Mammary epithelial cell (primary cell): ENCODE measurements at regions of chr10 and their contacts with region 1.

Region 1: GRCh38 chr10:32207544-32207943 is 139.4 kb downstream of the EPC1 start:
- DNase-seq: peak; percentile 39
- H3K4me3 ChIP-seq: no peak overlapping the region
- H3K27ac ChIP-seq: no peak overlapping the region
- H3K4me1 ChIP-seq: no peaks in the 10 kb centered on the region
- H3K27me3 ChIP-seq: no peaks in the 10 kb centered on the region
- CTCF ChIP-seq: peak; percentile 64 to 85

Region 2: GRCh38 chr10:31836569-31837406 is 370.8 kb before region 1 on chr10:
- CTCF ChIA-PET with region 1: no interaction called
- dilution Hi-C with region 1: no loop called
- in situ Hi-C with region 1: no loop called
- intact Hi-C with region 1: loop called (anchors 5 kb)
- DNase-seq: peak; percentile 2
- H3K4me3 ChIP-seq: no peak overlapping the region
- H3K27ac ChIP-seq: no peak overlapping the region
- H3K4me1 ChIP-seq: no peaks in the 10 kb centered on the region
- H3K27me3 ChIP-seq: no peaks in the 10 kb centered on the region
- CTCF ChIP-seq: peak; percentile 55 to 61

Region 3: DNA sequence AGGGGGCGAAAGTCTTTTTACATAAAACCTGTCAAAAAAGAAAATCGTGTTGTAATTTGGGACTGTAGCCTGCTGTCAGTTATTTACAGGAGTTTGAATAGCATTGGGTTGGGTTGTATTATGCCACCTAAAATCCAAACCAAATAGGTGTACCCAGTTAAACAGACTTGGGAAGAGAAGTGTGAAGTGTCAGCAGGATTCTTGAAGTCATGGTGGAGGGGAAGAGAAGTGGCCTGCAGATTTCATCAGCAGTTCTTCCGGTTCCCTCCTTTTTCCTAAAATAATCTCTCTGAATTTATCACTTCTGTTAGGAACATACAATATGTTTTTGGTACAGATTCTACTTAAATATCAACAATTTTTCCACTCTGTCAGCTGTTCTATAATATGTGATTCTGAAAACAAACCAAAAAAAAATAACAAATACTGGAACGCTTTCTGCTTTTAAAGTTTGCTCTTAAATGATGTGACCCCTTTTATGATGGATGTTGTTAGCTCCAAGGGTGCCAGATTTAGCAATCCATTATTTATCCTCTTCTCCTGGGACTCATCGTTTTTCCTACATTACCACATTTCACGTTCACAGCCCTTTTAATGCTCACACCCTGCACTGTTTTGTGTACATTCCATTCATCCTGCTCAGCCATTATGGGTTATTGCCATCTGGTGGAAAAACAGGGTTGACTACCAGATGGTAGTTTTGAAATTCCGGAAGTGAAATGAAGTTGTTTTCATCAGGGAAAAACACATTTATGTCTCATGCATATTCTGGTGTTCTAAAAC is 260.2 kb before region 1 on chr10:
- CTCF ChIA-PET with region 1: no interaction called
- dilution Hi-C with region 1: no loop called
- in situ Hi-C with region 1: no loop called
- intact Hi-C with region 1: loop called (anchors 1 kb)
- DNase-seq: peak; percentile 84
- H3K4me3 ChIP-seq: no peak overlapping the region
- H3K27ac ChIP-seq: peak overlapping the region; percentile 78
- H3K4me1 ChIP-seq: peaks cover 31% of the 10 kb centered on the region
- H3K27me3 ChIP-seq: no peaks in the 10 kb centered on the region
- CTCF ChIP-seq: peak; percentile 42 to 67

Region 4: DNA sequence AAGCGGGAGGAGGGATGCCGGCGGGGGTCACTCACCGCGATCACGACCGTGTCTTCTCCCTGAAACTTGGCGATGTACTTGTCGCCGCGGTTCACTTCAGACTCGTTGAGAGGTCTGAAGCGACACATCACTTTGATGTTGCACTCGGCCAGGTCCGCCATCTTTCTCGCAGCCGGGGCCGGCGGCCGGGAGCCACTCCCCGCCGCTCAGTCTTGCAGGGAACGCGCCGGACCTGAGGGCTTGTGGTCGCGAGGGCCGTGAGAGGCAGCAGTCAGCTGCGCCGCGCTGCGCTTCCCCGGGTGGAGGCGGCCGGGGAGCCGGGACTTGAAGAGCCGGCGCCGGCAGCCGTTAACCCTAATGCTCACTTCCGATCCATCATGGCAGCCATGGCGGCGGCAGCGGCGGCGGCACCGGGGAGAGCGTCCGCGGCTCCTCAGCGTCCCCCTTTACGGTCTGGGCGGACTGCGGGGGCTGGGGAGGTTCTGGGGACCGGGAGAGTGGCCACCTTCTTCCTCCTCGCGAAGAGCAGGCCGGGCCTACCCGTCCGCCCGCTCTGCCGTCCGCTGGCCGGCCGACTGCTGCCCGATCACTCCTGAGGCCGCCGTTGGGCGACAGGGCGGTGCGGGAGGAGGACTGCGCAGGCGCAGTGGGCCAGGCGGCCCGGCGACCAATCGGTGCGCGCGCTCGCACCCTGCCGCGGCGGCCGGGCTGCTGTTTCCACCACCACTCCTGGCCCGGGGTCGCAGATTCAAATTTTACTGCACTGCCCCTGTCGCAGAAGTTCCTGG is 151.5 kb before region 1 on chr10 and contains the start of gene KIF5B:
- CTCF ChIA-PET with region 1: no interaction called
- dilution Hi-C with region 1: no loop called
- in situ Hi-C with region 1: no loop called
- intact Hi-C with region 1: loop called (anchors 1 kb)
- DNase-seq: peak; percentile 79
- H3K4me3 ChIP-seq: peak within 1 kb of the TSS; percentile 82 to 95 (median 91)
- H3K27ac ChIP-seq: peak within 1 kb of the TSS; percentile 56
- H3K4me1 ChIP-seq: peaks cover 3% of the 10 kb centered on the region
- H3K27me3 ChIP-seq: no peaks in the 10 kb centered on the region
- CTCF ChIP-seq: no peak
- total RNA-seq, gene KIF5B: 146 to 168 TPM

Region 5: GRCh38 chr10:32256613-32257437 is 49.3 kb after region 1 on chr10:
- CTCF ChIA-PET with region 1: no interaction called
- dilution Hi-C with region 1: no loop called
- in situ Hi-C with region 1: no loop called
- intact Hi-C with region 1: loop called (anchors 1 kb)
- DNase-seq: peak; percentile 46
- H3K4me3 ChIP-seq: no peak overlapping the region
- H3K27ac ChIP-seq: no peak overlapping the region
- H3K4me1 ChIP-seq: peaks cover 13% of the 10 kb centered on the region
- H3K27me3 ChIP-seq: no peaks in the 10 kb centered on the region
- CTCF ChIP-seq: peak; percentile 94 to 98

Region 6: DNA sequence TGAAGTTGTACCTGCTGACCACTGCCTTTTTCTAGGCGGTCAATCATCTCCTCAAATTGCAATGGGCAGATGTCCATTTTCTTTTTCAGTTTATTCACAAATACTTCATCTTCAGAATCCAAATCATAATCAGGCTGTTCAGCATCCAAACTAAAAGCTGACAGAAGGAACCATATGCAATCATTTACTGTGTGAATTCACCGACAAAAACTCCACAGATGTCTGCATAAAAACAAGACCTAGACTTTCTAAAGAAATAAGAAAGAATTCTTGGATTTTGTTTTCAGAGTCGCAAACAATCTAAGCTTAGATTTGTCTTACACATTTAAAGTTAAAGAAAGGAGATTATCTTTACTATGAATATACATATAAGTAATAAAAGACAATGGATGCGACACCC is 86.0 kb after region 1 on chr10:
- CTCF ChIA-PET with region 1: no interaction called
- dilution Hi-C with region 1: no loop called
- in situ Hi-C with region 1: no loop called
- intact Hi-C with region 1: no loop called
- DNase-seq: no peak
- H3K4me3 ChIP-seq: no peak overlapping the region
- H3K27ac ChIP-seq: no peak overlapping the region
- H3K4me1 ChIP-seq: peaks cover 7% of the 10 kb centered on the region
- H3K27me3 ChIP-seq: no peaks in the 10 kb centered on the region
- CTCF ChIP-seq: no peak